ENCODE measurements at regions of chr3 and their contacts with region 1.

Region 1: GRCh38 chr3:59313365-59313764 is 263.5 kb upstream of the CFAP20DC start:
- DNase-seq: peak; percentile 74
- H3K4me3 Mint-ChIP-seq: no peak overlapping the region
- H3K27ac Mint-ChIP-seq: no peak overlapping the region
- H3K4me1 Mint-ChIP-seq: peaks cover 22% of the 10 kb centered on the region
- H3K27me3 Mint-ChIP-seq: no peaks in the 10 kb centered on the region

Region 2: GRCh38 chr3:59809710-59810444 is 496.5 kb after region 1 on chr3:
- CTCF ChIA-PET with region 1: no interaction called
- intact Hi-C with region 1: loop called (anchors 5 kb)
- DNase-seq: no peak
- H3K4me3 Mint-ChIP-seq: no peak overlapping the region
- H3K27ac Mint-ChIP-seq: no peak overlapping the region
- H3K4me1 Mint-ChIP-seq: peaks cover 25% of the 10 kb centered on the region
- H3K27me3 Mint-ChIP-seq: no peaks in the 10 kb centered on the region